CD4-positive, alpha-beta memory T cell (primary cell): ENCODE measurements at regions of chr3 and their contacts with region 1.

Region 1: GRCh38 chr3:72447059-72447946 is 400.9 kb downstream of the SHQ1 start:
- DNase-seq: peak; percentile 88 to 97 (median 95)
- H3K4me3 ChIP-seq: peak overlapping the region in 1 of 2 donors; percentile 79
- H3K4me3 Mint-ChIP-seq: peak overlapping the region; percentile 66 to 85 (median 73)
- H3K27ac ChIP-seq: peak overlapping the region; percentile 64
- H3K27ac Mint-ChIP-seq: peak overlapping the region in 4 of 7 donors; percentile 26 to 83 (median 68)
- H3K4me1 ChIP-seq: peaks cover 49% of the 10 kb centered on the region
- H3K4me1 Mint-ChIP-seq: peaks cover 34 to 43% (median 39%) of the 10 kb centered on the region in 4 donors
- H3K27me3 ChIP-seq: no peaks in the 10 kb centered on the region
- H3K27me3 Mint-ChIP-seq: peaks cover 9 to 10% of the 10 kb centered on the region in 2 donors

Region 2: GRCh38 chr3:71779674-71780377 is 667.5 kb before region 1 on chr3:
- CTCF ChIA-PET with region 1: no interaction called
- POLR2A ChIA-PET with region 1: no interaction called
- intact Hi-C with region 1: no loop called
- DNase-seq: peak in 1 of 5 donors; percentile 12
- H3K4me3 ChIP-seq: no peak overlapping the region
- H3K4me3 Mint-ChIP-seq: peak overlapping the region in 3 of 8 donors; percentile 7 to 22 (median 21)
- H3K27ac ChIP-seq: no peak overlapping the region
- H3K27ac Mint-ChIP-seq: peak overlapping the region in 1 of 7 donors; percentile 3
- H3K4me1 ChIP-seq: peaks cover 20% of the 10 kb centered on the region
- H3K4me1 Mint-ChIP-seq: peaks cover 9 to 17% (median 16%) of the 10 kb centered on the region in 4 donors
- H3K27me3 ChIP-seq: peaks cover 22% of the 10 kb centered on the region
- H3K27me3 Mint-ChIP-seq: peaks cover 40 to 57% of the 10 kb centered on the region in 2 donors

Region 3: GRCh38 chr3:72123908-72124441 is 323.3 kb before region 1 on chr3:
- CTCF ChIA-PET with region 1: no interaction called
- POLR2A ChIA-PET with region 1: no interaction called
- intact Hi-C with region 1: no loop called
- DNase-seq: no peak
- H3K4me3 ChIP-seq: no peak overlapping the region
- H3K4me3 Mint-ChIP-seq: no peak overlapping the region
- H3K27ac ChIP-seq: no peak overlapping the region
- H3K27ac Mint-ChIP-seq: no peak overlapping the region
- H3K4me1 ChIP-seq: no peaks in the 10 kb centered on the region
- H3K4me1 Mint-ChIP-seq: no peaks in the 10 kb centered on the region
- H3K27me3 ChIP-seq: no peaks in the 10 kb centered on the region
- H3K27me3 Mint-ChIP-seq: peaks cover 0 to 2% of the 10 kb centered on the region in 2 donors

Region 4: DNA sequence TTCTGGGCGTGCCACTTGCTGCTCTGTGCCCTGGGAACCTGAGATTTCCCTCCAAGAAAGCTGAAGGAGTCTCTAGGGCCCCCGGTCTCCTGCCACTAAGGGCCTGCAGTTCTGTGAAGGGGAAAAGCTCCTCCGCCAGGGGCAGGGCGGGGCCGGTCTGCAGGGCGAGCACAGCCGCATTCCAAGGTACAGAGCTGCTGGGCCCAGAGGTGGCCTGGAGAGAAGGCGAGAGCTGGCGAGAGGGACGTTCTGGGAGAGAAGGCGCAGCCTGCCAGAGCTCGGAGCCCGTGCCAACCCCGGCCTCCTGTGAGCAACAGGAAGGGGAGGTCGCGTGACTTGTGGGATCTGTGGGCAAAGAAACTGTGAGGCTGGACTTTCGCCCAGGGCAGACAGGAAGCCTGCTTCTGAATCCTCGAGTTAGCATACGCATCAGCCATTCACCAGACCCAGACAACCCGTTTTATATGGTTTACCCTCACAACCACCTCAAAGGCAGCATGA is 99.4 kb before region 1 on chr3:
- CTCF ChIA-PET with region 1: no interaction called
- POLR2A ChIA-PET with region 1: no interaction called
- intact Hi-C with region 1: loop called (anchors 10 kb)
- DNase-seq: peak in 4 of 5 donors; percentile 11 to 48 (median 30)
- H3K4me3 ChIP-seq: no peak overlapping the region
- H3K4me3 Mint-ChIP-seq: peak overlapping the region in 5 of 8 donors; percentile 17 to 61 (median 33)
- H3K27ac ChIP-seq: no peak overlapping the region
- H3K27ac Mint-ChIP-seq: peak overlapping the region in 4 of 7 donors; percentile 37 to 85 (median 66)
- H3K4me1 ChIP-seq: peaks cover 55% of the 10 kb centered on the region
- H3K4me1 Mint-ChIP-seq: peaks cover 29 to 52% (median 40%) of the 10 kb centered on the region in 4 donors
- H3K27me3 ChIP-seq: no peaks in the 10 kb centered on the region
- H3K27me3 Mint-ChIP-seq: no peaks in the 10 kb centered on the region

Region 5: DNA sequence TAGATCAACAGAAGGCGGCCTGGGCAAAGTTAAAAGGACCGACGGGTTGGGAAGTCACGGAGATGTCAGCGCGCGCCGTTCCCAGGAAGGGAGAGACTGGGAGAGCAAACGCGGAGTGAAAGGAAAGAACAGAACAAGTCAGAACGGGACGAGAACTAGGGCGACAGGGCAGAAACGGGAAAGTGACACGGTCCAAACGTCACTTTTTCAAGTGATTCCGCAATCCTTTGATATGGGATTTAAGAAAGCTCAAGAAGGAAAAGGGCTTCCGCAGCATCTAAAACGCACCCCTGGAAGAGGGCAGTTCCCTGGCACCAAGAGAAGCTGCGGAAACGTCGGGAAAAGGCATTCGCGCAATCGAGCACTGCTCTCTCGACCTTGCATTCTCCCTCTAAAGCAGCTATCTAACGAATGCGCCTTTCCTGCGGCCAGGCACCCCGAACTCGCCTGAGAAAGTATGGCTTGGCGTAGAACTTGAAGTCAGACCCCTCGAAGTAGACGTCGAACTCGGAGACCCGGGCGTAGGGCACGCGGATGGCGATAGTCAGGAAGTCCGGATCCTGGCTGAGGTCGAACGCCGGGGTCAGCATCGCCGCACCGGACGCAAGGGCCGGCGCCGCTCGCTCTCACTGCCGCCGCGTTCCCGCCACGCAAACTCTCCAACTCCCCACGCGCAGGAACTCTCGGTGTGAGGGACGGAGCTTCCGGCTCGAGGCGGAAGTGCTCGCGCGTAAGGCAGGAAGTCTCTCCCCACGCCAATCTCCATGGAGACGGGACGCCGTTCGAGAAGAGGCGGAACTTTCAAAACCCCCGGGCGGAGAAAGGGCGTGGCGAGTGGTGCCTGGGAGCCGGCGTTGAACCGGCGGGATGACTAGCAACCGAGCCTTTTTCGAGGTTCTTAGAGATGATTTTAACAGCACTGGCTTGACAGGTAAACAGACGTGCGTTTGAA is 400.7 kb after region 1 on chr3 and contains the start of gene SHQ1:
- CTCF ChIA-PET with region 1: no interaction called
- POLR2A ChIA-PET with region 1: no interaction called
- intact Hi-C with region 1: loop called (anchors 5 kb)
- DNase-seq: peak; percentile 91 to 96 (median 92)
- H3K4me3 ChIP-seq: peak within 1 kb of the TSS; percentile 82 to 97
- H3K4me3 Mint-ChIP-seq: peak within 1 kb of the TSS; percentile 94 to 97 (median 96)
- H3K27ac ChIP-seq: peak within 1 kb of the TSS; percentile 61
- H3K27ac Mint-ChIP-seq: peak within 1 kb of the TSS; percentile 78 to 95 (median 93)
- H3K4me1 ChIP-seq: peaks cover 47% of the 10 kb centered on the region
- H3K4me1 Mint-ChIP-seq: peaks cover 38 to 60% (median 48%) of the 10 kb centered on the region in 4 donors
- H3K27me3 ChIP-seq: no peaks in the 10 kb centered on the region
- H3K27me3 Mint-ChIP-seq: peaks cover 0 to 2% of the 10 kb centered on the region in 2 donors
- total RNA-seq, gene SHQ1: 28.7 to 31.2 TPM